ENCODE measurements at regions of chr3 and their contacts with region 1.

Region 1: DNA sequence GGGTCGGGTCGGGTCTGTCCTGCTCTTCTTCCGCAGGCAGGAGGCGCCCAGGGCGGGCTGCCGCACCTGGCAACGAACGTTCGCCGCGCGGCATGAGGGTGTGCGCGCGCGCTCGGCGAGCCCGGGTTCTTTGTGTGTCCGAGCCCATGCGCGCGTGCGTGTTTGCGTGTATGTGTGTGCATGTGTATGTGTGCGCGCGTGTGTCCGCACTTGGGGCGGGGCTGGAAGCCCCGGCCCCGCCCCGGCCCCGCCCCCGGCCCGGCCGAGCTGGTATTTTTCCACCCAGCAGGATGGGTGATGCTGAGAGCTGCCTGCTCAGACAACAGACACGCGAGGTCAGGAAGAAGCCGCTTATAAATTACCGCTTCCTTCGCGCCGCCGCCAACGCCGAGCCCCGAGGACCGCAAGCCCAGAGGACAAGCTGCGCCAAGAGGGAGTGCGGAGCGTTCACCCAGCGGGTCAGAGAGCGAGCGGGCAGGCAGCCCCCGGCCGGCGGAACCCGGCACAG is at the start of gene SLC6A6:
- DNase-seq: peak; percentile 91
- H3K4me3 ChIP-seq: peak within 1 kb of the TSS; percentile 9 to 90 (median 34)
- H3K27ac ChIP-seq: peak within 1 kb of the TSS; percentile 32
- H3K4me1 ChIP-seq: peaks cover 12% of the 10 kb centered on the region
- H3K27me3 ChIP-seq: no peaks in the 10 kb centered on the region
- CTCF ChIP-seq: peak; percentile 17 to 51
- POLR2A ChIP-seq: peak; percentile 80
- total RNA-seq, gene SLC6A6: 33.8 and 38.0 TPM in 2 replicates

Region 2: GRCh38 chr3:14144423-14145075 is 257.8 kb before region 1 on chr3:
- CTCF ChIA-PET with region 1: no interaction called
- POLR2A ChIA-PET with region 1: no interaction called
- dilution Hi-C with region 1: no loop called
- intact Hi-C with region 1: loop called (anchors 10 kb)
- DNase-seq: peak; percentile 97
- H3K4me3 ChIP-seq: peak overlapping the region in 1 of 3 experiments; percentile 20
- H3K27ac ChIP-seq: peak overlapping the region; percentile 100
- H3K4me1 ChIP-seq: peaks cover 41% of the 10 kb centered on the region
- H3K27me3 ChIP-seq: no peaks in the 10 kb centered on the region
- CTCF ChIP-seq: no peak
- POLR2A ChIP-seq: peak; percentile 69

Region 3: GRCh38 chr3:14323401-14324223 is 78.7 kb before region 1 on chr3:
- CTCF ChIA-PET with region 1: no interaction called
- POLR2A ChIA-PET with region 1: no interaction called
- dilution Hi-C with region 1: no loop called
- intact Hi-C with region 1: loop called (anchors 2 kb)
- DNase-seq: peak; percentile 8
- H3K4me3 ChIP-seq: no peak overlapping the region
- H3K27ac ChIP-seq: peak overlapping the region; percentile 28
- H3K4me1 ChIP-seq: peaks cover 15% of the 10 kb centered on the region
- H3K27me3 ChIP-seq: peaks cover 0 to 2% of the 10 kb centered on the region in 2 experiments
- CTCF ChIP-seq: no peak
- POLR2A ChIP-seq: no peak

Region 4: DNA sequence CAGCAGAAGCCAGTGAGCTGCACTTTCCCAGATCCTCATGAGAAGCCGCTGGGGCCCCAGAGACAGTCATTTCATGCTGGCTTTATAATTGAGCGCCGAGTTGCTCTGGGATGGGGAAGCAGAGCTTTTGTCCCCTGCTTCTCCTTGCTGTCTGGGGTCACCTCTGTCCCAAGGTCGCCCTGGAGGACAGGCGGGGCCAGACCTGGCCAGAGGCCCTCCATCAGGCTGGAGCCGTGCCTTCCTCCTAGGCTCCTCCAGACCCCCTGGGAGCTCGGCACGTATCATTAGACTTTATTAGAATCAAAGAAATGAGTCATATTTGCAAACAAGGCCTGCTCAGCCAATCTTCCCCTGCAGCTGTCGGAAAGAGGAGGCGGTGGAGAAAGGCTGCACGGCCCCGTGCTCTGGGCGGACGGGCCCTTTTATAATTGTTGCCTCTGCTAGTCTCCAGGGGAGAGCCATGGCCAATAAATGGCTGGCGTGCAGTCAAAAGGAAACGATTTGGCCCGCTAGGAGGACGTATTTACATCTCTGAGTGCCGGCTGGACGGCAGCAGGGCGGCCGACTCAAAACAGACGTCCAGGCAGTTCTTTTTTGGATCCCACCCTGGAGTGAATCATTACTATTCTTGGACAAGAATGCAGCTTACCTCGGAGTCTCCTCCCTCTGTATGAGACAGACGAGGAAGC is 50.5 kb after region 1 on chr3:
- CTCF ChIA-PET with region 1: interaction called, 8 read pairs
- POLR2A ChIA-PET with region 1: interaction called, 3 read pairs
- dilution Hi-C with region 1: no loop called
- intact Hi-C with region 1: loop called (anchors 1 kb)
- DNase-seq: peak; percentile 100
- H3K4me3 ChIP-seq: no peak overlapping the region
- H3K27ac ChIP-seq: peak overlapping the region; percentile 89
- H3K4me1 ChIP-seq: peaks cover 25% of the 10 kb centered on the region
- H3K27me3 ChIP-seq: no peaks in the 10 kb centered on the region
- CTCF ChIP-seq: peak in 1 of 2 donors; percentile 7
- POLR2A ChIP-seq: no peak

Region 5: GRCh38 chr3:14467814-14468620 is 65.7 kb after region 1 on chr3:
- CTCF ChIA-PET with region 1: interaction called, 7 read pairs
- POLR2A ChIA-PET with region 1: no interaction called
- dilution Hi-C with region 1: no loop called
- intact Hi-C with region 1: loop called (anchors 2 kb)
- DNase-seq: peak; percentile 41
- H3K4me3 ChIP-seq: no peak overlapping the region
- H3K27ac ChIP-seq: no peak overlapping the region
- H3K4me1 ChIP-seq: peaks cover 7% of the 10 kb centered on the region
- H3K27me3 ChIP-seq: no peaks in the 10 kb centered on the region
- CTCF ChIP-seq: peak; percentile 64 to 85
- POLR2A ChIP-seq: no peak

Region 6: DNA sequence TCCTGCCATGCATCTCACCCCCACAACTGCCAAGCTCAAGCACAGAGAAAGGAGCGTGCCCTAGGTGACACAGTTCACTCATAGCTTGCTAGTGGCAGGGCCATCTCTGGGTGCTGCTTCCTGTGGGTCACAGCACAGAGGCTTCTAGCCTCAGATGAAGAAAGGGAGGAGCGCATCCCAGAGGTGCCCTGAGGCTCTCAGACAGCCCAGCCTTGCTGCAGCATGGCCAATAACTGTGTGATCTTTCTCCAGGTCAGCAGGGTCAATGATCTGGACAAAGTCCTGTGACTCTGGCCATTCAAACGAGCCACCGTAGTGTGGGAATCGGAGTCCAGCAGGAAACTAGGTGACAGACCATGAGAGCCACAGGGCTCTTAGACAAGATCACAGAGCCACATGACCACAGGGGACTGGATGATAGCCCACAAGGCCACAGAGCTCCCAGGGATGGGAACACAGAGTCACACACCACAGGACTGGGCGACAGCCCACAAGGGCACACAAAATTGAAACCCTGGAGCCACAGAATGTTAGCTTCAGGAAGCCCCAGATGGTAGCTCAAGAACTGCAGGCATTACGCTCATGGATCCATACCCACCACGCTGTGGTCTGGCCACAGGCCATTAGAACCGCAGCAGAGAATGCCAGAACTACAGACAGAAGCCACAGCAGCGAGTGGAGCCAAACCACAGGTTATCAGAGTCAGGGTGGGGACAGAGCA is 163.7 kb after region 1 on chr3:
- CTCF ChIA-PET with region 1: no interaction called
- POLR2A ChIA-PET with region 1: no interaction called
- dilution Hi-C with region 1: no loop called
- intact Hi-C with region 1: no loop called
- DNase-seq: no peak
- H3K4me3 ChIP-seq: no peak overlapping the region
- H3K27ac ChIP-seq: no peak overlapping the region
- H3K4me1 ChIP-seq: no peaks in the 10 kb centered on the region
- H3K27me3 ChIP-seq: no peaks in the 10 kb centered on the region
- CTCF ChIP-seq: no peak
- POLR2A ChIP-seq: no peak

Region 7: GRCh38 chr3:15015456-15015855 is 613.1 kb after region 1 on chr3:
- CTCF ChIA-PET with region 1: no interaction called
- POLR2A ChIA-PET with region 1: no interaction called
- dilution Hi-C with region 1: no loop called
- intact Hi-C with region 1: no loop called
- DNase-seq: no peak
- H3K4me3 ChIP-seq: no peak overlapping the region
- H3K27ac ChIP-seq: no peak overlapping the region
- H3K4me1 ChIP-seq: no peaks in the 10 kb centered on the region
- H3K27me3 ChIP-seq: no peaks in the 10 kb centered on the region
- CTCF ChIP-seq: no peak
- POLR2A ChIP-seq: no peak